Activated CD4-positive, alpha-beta T cell treated with anti-CD3 and anti-CD28 coated beads for 36 hours (primary cell): ENCODE measurements at regions of chr11 and their contacts with region 1.

Region 1: GRCh38 chr11:10307442-10308207 is 2.8 kb downstream of the ADM start:
- DNase-seq: peak; percentile 95
- ATAC-seq: peak; percentile 75
- H3K4me3 Mint-ChIP-seq: peak overlapping the region; percentile 77
- H3K27ac Mint-ChIP-seq: peak overlapping the region; percentile 96
- H3K4me1 Mint-ChIP-seq: peaks cover 50% of the 10 kb centered on the region
- H3K27me3 Mint-ChIP-seq: peaks cover 49% of the 10 kb centered on the region

Region 2: DNA sequence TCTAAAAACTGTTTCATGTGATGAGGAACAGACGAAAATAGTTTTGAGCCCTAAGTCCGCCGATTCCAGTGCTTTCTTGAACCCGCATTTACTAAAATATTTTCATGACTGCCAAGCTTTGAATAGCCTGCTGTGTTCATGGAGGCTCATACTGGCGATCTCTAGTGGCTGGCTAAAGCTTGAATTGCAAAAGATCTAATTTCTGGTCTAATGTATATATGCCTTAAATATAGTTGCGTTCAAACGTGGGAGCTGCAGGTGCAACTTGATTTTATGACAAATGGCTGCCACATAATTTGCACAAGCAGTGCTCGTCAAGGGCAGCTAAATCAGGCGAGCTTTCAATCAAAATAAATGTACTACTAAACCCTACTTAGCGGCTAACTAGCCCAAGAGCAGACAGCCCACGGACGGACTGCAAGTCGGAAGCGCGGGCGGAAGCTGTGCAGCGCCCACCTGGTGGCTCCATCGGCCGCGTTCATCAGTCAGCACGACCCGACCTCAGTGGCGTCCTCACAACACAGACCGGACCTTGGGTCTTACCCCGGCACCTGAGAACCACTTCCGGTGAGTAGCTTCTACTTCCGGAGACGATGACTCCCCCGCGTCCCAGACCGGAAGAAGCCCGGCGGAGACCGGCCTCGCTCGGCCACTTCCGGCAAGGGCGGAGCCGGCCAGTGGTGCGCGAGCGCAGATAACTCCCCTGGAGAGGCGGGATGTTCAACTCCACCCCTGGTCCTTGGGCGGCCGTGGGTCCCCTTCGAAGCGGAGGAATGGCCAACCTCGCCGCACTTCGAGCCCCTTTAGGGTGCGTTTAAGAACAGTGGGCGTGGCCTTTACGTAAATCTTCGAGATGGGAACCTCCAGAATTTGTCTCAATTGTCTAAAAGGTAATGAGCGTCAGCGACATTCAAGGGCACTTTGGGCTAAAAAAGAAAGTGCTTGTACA is 1618.9 kb before region 1 on chr11:
- CTCF ChIA-PET with region 1: no interaction called
- POLR2A ChIA-PET with region 1: no interaction called
- intact Hi-C with region 1: loop called in 1 of 2 experiments (anchors 10 kb)
- DNase-seq: peak; percentile 92
- ATAC-seq: peak; percentile 90
- H3K4me3 Mint-ChIP-seq: peak overlapping the region; percentile 94
- H3K27ac Mint-ChIP-seq: peak overlapping the region; percentile 98
- H3K4me1 Mint-ChIP-seq: peaks cover 56% of the 10 kb centered on the region
- H3K27me3 Mint-ChIP-seq: no peaks in the 10 kb centered on the region

Region 3: GRCh38 chr11:9363954-9364912 is 943.4 kb before region 1 on chr11:
- CTCF ChIA-PET with region 1: no interaction called
- POLR2A ChIA-PET with region 1: no interaction called
- intact Hi-C with region 1: loop called in 1 of 2 experiments (anchors 5 kb)
- DNase-seq: peak; percentile 92
- ATAC-seq: peak; percentile 88
- H3K4me3 Mint-ChIP-seq: peak overlapping the region; percentile 62
- H3K27ac Mint-ChIP-seq: peak overlapping the region; percentile 88
- H3K4me1 Mint-ChIP-seq: peaks cover 30% of the 10 kb centered on the region
- H3K27me3 Mint-ChIP-seq: no peaks in the 10 kb centered on the region

Region 4: DNA sequence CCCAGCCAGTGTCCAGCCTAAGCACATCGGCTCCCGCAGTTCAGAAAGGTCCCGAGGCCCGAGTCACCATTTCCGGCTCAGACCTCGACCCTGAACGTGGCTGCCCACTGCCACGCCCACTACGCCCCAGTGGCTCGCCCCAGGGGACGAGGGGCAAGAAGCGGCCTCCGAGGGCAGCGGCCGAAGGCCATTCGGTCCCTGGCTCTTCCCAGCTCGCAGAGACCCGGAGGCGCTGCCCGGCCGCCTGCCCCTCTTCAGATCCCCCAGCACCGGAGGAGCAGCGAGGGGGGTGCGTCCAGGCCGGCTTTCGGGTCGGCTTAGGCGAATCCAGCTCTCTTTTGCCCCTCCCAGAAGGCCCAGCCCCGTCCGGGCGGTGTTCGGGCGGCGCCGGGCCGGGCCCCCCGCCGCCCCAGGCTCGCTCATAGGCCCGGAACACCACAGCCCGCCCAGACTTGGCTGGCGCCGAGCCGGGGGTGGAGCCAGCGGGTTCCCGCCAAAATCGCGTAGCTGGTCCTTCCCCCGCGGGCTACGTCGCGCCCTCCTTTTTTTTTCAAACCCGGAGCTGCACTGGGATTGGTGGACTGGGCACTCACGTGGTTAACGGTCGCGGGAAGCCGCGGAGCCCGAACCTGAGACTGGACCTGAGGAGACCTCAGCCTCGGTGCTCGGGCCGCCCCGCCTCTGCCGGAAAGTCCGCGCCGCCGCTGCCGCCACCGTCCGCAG is 734.4 kb before region 1 on chr11 and contains the start of gene WEE1:
- CTCF ChIA-PET with region 1: interaction called, 3 read pairs
- POLR2A ChIA-PET with region 1: no interaction called
- intact Hi-C with region 1: loop called in 1 of 2 experiments (anchors 2 kb)
- DNase-seq: peak; percentile 99
- ATAC-seq: peak; percentile 94
- H3K4me3 Mint-ChIP-seq: peak within 1 kb of the TSS; percentile 94
- H3K27ac Mint-ChIP-seq: peak within 1 kb of the TSS; percentile 82
- H3K4me1 Mint-ChIP-seq: peaks cover 33% of the 10 kb centered on the region
- H3K27me3 Mint-ChIP-seq: peaks cover 3% of the 10 kb centered on the region
- total RNA-seq, gene WEE1: 44.8 to 46.5 TPM

Region 5: DNA sequence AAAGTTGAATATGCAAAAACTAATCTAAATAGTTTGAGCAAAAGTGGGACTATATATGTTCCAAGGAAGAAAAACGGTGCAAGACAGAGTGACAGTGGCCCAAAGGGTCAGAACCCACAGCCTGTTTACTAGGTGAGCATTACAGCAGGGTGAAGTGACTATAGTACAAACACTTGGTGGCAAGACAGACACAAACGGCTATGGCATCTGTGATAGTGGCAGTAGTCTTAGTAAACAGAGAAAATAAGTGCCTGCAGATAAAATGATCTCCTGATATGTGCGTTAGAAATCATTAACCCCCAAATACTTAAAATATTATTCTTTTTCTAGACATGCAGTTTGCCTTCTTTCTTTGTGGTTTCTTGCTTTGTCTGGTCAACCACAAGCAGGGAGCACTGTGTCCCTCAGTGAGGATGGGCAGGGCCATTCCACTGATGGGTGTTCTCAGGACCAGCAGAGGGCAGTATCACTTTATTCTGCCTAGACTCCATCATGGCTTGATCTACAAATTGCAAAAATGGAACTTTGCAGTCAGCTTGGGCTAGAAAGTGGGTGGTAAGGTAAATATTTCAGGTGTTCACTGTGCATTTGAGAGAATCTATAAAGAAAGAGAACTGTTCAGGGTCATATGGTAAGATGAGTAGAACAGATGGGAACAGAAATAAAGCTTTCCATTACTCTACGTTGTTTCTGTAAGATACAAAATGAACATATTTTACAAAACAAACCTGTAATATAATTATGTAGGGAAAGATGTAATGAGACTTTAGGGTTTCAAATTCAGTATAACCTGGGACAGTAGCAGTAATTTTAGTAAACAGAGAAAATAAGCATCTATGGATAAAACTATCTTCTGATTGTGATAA is 445.5 kb before region 1 on chr11:
- CTCF ChIA-PET with region 1: interaction called, 8 read pairs
- POLR2A ChIA-PET with region 1: no interaction called
- intact Hi-C with region 1: loop called (anchors 1 kb)
- DNase-seq: peak; percentile 71
- ATAC-seq: peak; percentile 74
- H3K4me3 Mint-ChIP-seq: no peak overlapping the region
- H3K27ac Mint-ChIP-seq: no peak overlapping the region
- H3K4me1 Mint-ChIP-seq: peaks cover 23% of the 10 kb centered on the region
- H3K27me3 Mint-ChIP-seq: no peaks in the 10 kb centered on the region

Region 6: GRCh38 chr11:10322830-10323792 is 15.5 kb after region 1 on chr11:
- CTCF ChIA-PET with region 1: interaction called, 41 read pairs
- POLR2A ChIA-PET with region 1: interaction called, 4 read pairs
- intact Hi-C with region 1: loop called (anchors 1 kb)
- DNase-seq: peak; percentile 71
- ATAC-seq: peak; percentile 84
- H3K4me3 Mint-ChIP-seq: peak overlapping the region; percentile 26
- H3K27ac Mint-ChIP-seq: peak overlapping the region; percentile 86
- H3K4me1 Mint-ChIP-seq: peaks cover 16% of the 10 kb centered on the region
- H3K27me3 Mint-ChIP-seq: peaks cover 2% of the 10 kb centered on the region

Region 7: DNA sequence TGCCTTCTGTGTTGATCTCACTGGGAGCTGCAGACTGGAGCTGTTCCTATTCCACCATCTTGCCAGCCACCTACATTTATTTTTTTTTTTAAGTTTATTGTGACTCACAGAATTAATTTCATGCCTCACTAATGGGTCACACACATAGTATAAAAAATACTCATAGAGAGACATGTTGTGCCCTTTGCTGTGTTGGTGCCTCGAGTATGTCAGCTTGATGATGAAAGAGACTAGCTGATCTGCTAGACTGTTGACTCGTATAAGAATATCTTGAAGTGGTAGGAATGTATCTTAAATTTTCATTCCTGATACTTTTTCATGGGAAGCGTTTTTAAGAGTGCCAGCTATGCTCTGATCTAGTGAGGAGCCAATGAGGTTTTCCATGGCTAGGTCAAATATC is 118.8 kb after region 1 on chr11:
- CTCF ChIA-PET with region 1: no interaction called
- POLR2A ChIA-PET with region 1: no interaction called
- intact Hi-C with region 1: no loop called
- DNase-seq: no peak
- ATAC-seq: no peak
- H3K4me3 Mint-ChIP-seq: no peak overlapping the region
- H3K27ac Mint-ChIP-seq: no peak overlapping the region
- H3K4me1 Mint-ChIP-seq: no peaks in the 10 kb centered on the region
- H3K27me3 Mint-ChIP-seq: peaks cover 2% of the 10 kb centered on the region

Region 8: DNA sequence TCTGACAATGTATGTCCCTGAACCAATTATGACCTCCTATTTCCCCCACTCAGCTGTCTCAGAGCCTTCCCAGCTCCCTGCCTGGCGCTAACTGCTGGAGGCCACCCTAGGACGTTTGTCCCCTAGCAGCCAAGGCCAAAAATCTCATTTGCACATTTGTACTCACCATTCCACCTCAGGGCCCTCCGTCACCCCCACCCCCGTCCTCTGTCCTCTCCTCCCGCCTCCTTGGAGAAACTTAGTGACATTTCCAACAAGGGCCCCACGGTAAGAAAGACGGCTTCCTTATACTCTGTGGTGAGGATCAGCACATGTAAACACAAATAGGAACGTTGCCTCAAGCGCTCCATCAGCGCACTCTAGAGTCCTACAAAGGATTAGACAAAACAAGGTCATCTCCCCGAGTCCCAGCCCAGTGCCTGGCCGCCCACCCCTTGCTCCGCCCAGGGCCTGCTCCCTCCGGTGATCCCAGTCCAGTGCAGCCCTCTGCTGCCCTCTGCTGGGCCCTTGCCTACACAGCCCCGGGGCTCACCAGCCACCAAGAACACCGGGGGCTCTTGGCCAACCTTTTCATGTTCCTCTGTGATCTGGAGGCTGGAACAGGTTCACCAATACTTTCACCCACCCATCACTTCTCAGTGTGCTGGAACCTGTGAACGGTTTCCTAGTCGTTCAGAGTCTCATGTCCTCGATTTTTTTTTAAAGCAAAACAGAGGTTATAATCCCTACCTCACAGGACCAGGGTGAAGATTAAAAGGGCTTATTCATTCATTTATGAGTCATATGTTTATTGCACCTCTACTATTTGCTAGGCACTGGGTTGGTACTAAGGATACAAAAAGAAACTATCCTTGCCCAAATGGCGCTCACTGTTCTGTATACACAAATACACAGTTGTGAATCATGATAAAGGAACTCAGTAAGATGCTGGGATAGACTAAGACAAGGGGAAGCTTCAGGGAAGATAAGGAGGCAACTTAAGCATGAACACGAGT is 428.2 kb after region 1 on chr11:
- CTCF ChIA-PET with region 1: interaction called, 3 read pairs
- POLR2A ChIA-PET with region 1: no interaction called
- intact Hi-C with region 1: loop called in 1 of 2 experiments (anchors 5 kb)
- DNase-seq: peak; percentile 95
- ATAC-seq: peak; percentile 99
- H3K4me3 Mint-ChIP-seq: peak overlapping the region; percentile 11
- H3K27ac Mint-ChIP-seq: peak overlapping the region; percentile 2
- H3K4me1 Mint-ChIP-seq: peaks cover 10% of the 10 kb centered on the region
- H3K27me3 Mint-ChIP-seq: no peaks in the 10 kb centered on the region